ENCODE measurements at regions of chr11 and their contacts with region 1.

Region 1: DNA sequence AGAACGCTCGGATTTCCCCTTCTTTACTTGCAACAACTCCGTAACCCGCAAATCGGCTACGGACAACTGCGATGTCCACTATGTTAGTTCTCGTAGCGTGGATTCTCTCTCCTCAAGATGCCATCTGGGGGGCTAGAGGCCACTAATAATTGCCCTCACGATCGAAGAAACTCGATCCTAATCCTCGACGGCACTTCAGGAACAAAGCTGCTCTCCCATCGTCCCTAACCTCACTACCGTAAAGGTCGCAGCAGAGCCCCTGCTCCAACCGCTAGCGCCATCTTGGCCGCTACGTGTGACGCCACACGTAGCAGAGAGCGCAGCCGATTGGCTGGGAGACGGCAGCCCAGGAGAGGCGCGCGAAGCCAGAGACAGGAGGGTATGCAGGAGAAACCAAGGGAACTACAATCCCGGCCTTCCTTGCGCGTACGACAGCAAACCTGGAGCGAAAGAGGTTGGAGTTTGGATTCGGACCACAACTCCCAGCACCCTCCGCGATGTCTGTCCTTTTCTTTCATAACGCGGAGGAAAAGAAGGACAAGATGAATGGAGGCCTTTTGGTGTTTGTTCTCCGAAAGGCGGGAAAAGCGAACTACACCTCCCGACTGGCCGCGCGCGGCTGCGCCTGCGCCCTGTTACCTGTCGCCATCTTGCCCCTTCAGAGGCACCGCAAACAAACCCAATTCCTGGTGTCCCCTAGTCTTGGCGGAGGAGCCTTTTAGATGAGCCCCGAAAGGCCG is at the start of gene EMSY:
- DNase-seq: peak; percentile 98 to 99 (median 98)
- ATAC-seq: peak; percentile 95
- H3K4me3 ChIP-seq: peak within 1 kb of the TSS; percentile 98 to 99
- H3K27ac ChIP-seq: peak within 1 kb of the TSS; percentile 83 to 90
- H3K4me1 ChIP-seq: peaks cover 10 to 25% of the 10 kb centered on the region in 2 donors
- H3K27me3 ChIP-seq: no peaks in the 10 kb centered on the region
- CTCF ChIP-seq: no peak
- polyA plus RNA-seq, gene EMSY: 34.9 to 43.9 (median 38.5) TPM

Region 2: GRCh38 chr11:76371170-76371569 is 73.4 kb before region 1 on chr11:
- intact Hi-C with region 1: loop called in 1 of 2 experiments (anchors 10 kb)
- DNase-seq: no peak
- ATAC-seq: peak; percentile 94
- H3K4me3 ChIP-seq: no peak overlapping the region
- H3K27ac ChIP-seq: peak overlapping the region in 1 of 2 donors; percentile 33
- H3K4me1 ChIP-seq: peaks cover 8 to 66% of the 10 kb centered on the region in 2 donors
- H3K27me3 ChIP-seq: no peaks in the 10 kb centered on the region
- CTCF ChIP-seq: no peak

Region 3: GRCh38 chr11:76480241-76480640 is 35.7 kb after region 1 on chr11:
- intact Hi-C with region 1: no loop called
- DNase-seq: no peak
- ATAC-seq: no peak
- H3K4me3 ChIP-seq: no peak overlapping the region
- H3K27ac ChIP-seq: no peak overlapping the region
- H3K4me1 ChIP-seq: no peaks in the 10 kb centered on the region
- H3K27me3 ChIP-seq: no peaks in the 10 kb centered on the region
- CTCF ChIP-seq: no peak

Measured in left lung (tissue), 14 donors.